Aorta (tissue), 5 donors: ENCODE measurements at regions of chr19 and their contacts with region 1.

Region 1: DNA sequence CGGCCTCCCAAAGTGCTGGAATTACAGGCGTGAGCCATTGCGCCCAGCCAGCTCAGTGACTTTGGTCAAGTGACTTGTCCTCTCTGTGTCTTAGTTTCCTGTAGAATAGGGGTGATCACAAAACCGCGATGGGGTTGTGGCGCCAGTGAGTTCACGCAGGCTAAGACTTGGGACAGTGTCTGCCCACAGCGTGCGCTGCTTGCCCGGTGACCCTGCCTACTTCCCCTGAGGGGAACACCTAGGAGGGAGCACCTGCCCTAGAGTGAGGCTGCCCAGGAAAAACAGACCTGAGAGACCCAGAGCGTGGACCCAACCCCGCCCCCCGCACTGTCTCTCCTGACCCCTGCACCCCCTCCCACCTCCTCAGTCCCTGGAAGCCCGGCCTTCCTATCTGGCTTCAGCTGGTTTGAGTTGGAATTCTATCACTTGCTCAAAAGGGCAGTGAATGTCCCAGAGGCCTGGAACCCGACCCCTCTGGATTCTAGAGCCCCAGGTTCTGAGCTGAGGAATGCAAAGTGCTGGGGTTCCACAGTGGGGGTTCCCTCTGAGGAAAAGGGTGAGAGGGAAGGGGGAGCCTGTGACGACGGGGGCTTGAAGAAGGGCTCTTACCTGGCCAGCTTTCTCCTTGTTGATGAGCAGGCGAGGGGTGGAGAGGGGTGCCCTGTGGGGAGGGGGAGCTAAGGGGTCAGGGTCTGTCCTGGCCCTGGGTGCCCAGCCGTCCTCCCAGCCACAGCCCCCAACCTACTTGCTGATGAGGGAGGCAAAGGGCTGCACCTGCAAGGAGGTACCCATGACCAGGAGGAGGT is 2.2 kb upstream of the RINL start:
- DNase-seq: no peak
- ATAC-seq: no peak
- H3K4me3 ChIP-seq: no peak overlapping the region
- H3K27ac ChIP-seq: no peak overlapping the region
- H3K4me1 ChIP-seq: no peaks in the 10 kb centered on the region
- H3K27me3 ChIP-seq: no peaks in the 10 kb centered on the region

Region 2: GRCh38 chr19:38402967-38403861 is 477.1 kb before region 1 on chr19 and contains the start of gene FAM98C:
- intact Hi-C with region 1: loop called in 1 of 2 experiments (anchors 10 kb)
- DNase-seq: peak; percentile 98 to 99
- ATAC-seq: peak; percentile 99
- H3K4me3 ChIP-seq: peak within 1 kb of the TSS; percentile 71 to 76
- H3K27ac ChIP-seq: peak within 1 kb of the TSS in 1 of 2 donors; percentile 37
- H3K4me1 ChIP-seq: no peaks in the 10 kb centered on the region
- H3K27me3 ChIP-seq: no peaks in the 10 kb centered on the region
- total RNA-seq, gene FAM98C: 14.5 to 19.6 TPM

Region 3: DNA sequence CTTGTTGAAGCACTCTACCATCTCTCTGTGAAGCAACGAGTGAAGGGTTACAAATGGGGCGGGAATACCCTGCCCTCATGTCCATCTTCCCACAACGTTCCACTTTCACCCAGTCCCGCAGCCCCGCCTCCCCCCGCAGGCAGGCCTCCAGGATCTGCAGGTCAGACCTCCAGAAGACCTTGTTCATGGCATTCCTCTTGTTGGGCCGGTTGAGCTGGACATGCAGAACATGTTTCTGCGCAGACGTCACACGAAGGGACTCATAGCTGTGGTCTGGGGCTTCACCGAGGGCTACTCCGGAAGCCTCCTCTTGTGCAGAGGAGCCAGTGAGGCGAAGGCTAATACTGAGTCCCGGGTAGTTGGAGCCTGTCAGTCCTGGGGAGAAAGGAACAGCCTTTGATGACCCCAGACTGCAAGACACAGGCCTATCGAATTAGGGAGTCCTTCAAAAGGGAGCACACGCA is 49.1 kb before region 1 on chr19:
- intact Hi-C with region 1: no loop called
- DNase-seq: peak; percentile 81 to 88
- ATAC-seq: peak; percentile 64
- H3K4me3 ChIP-seq: peak overlapping the region; percentile 42 to 43
- H3K27ac ChIP-seq: peak overlapping the region in 1 of 2 donors; percentile 78
- H3K4me1 ChIP-seq: peaks cover 0 to 2% of the 10 kb centered on the region in 2 donors
- H3K27me3 ChIP-seq: no peaks in the 10 kb centered on the region